ENCODE measurements at regions of chr19 and their contacts with region 1.

Region 1: GRCh38 chr19:737581-738093 is 13.3 kb upstream of the MISP start:
- DNase-seq: peak; percentile 82
- H3K4me3 ChIP-seq: no peak overlapping the region
- H3K27ac ChIP-seq: no peak overlapping the region
- H3K4me1 ChIP-seq: peaks cover 0 to 32% (median 14%) of the 10 kb centered on the region in 6 donors
- H3K27me3 ChIP-seq: peaks cover 0 to 4% (median 0%) of the 10 kb centered on the region in 7 donors
- CTCF ChIP-seq: peak in 10 of 11 experiments; percentile 25 to 71 (median 58)
- POLR2A ChIP-seq: no peak

Region 2: GRCh38 chr19:588093-588740 is 149.4 kb before region 1 on chr19:
- intact Hi-C with region 1: loop called (anchors 10 kb)
- DNase-seq: no peak
- H3K4me3 ChIP-seq: peak overlapping the region in 1 of 8 donors; percentile 21
- H3K27ac ChIP-seq: no peak overlapping the region
- H3K4me1 ChIP-seq: peaks cover 15 to 47% (median 40%) of the 10 kb centered on the region in 6 donors
- H3K27me3 ChIP-seq: peaks cover 8 to 92% (median 57%) of the 10 kb centered on the region in 7 donors
- CTCF ChIP-seq: peak in 7 of 11 experiments; percentile 12 to 64 (median 46)
- POLR2A ChIP-seq: no peak

Region 3: GRCh38 chr19:610801-611505 is 126.7 kb before region 1 on chr19:
- intact Hi-C with region 1: no loop called
- DNase-seq: peak; percentile 90
- H3K4me3 ChIP-seq: peak overlapping the region; percentile 19 to 71 (median 38)
- H3K27ac ChIP-seq: peak overlapping the region; percentile 61 to 89 (median 86)
- H3K4me1 ChIP-seq: peaks cover 22 to 42% (median 38%) of the 10 kb centered on the region in 6 donors
- H3K27me3 ChIP-seq: peaks cover 0 to 18% (median 0%) of the 10 kb centered on the region in 7 donors
- CTCF ChIP-seq: no peak
- POLR2A ChIP-seq: no peak

Measured in spleen (tissue), 13 donors.